ENCODE measurements at regions of chr3 and their contacts with region 1.

Region 1: GRCh38 chr3:14780927-14781507 is 37.7 kb upstream of the FGD5 start:
- DNase-seq: peak; percentile 82
- CTCF ChIP-seq: peak; percentile 88

Region 2: DNA sequence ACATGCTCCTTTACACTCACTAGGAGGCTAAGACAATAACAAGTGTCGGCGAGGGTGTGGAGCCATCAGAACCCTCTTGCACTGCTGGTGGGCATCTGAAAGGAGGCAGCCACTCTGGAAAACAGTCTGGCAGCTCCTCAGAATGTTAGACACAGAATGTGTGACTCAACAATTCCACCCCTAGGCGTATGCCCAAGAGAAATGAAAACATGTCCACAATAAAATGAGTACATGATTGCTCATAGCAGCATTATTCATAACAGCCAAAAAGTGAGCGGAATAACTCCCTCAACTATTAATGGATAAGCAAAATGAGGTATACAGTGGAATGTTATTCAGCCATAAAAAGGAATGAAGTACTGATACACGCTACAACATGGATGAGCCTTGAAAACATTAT is 959.0 kb before region 1 on chr3:
- CTCF ChIA-PET with region 1: no interaction called
- POLR2A ChIA-PET with region 1: no interaction called
- DNase-seq: no peak
- CTCF ChIP-seq: no peak

Region 3: GRCh38 chr3:14508961-14509795 is 271.8 kb before region 1 on chr3:
- CTCF ChIA-PET with region 1: interaction called, 21 read pairs
- POLR2A ChIA-PET with region 1: no interaction called
- DNase-seq: peak; percentile 87
- CTCF ChIP-seq: peak; percentile 93

Region 4: GRCh38 chr3:14651440-14652251 is 129.4 kb before region 1 on chr3 and contains the start of gene CCDC174:
- CTCF ChIA-PET with region 1: interaction called, 24 read pairs
- POLR2A ChIA-PET with region 1: no interaction called
- DNase-seq: peak; percentile 94
- CTCF ChIP-seq: no peak

Region 5: GRCh38 chr3:14691239-14691638 is 89.8 kb before region 1 on chr3:
- CTCF ChIA-PET with region 1: interaction called, 17 read pairs
- POLR2A ChIA-PET with region 1: no interaction called
- DNase-seq: peak; percentile 50
- CTCF ChIP-seq: no peak

Region 6: DNA sequence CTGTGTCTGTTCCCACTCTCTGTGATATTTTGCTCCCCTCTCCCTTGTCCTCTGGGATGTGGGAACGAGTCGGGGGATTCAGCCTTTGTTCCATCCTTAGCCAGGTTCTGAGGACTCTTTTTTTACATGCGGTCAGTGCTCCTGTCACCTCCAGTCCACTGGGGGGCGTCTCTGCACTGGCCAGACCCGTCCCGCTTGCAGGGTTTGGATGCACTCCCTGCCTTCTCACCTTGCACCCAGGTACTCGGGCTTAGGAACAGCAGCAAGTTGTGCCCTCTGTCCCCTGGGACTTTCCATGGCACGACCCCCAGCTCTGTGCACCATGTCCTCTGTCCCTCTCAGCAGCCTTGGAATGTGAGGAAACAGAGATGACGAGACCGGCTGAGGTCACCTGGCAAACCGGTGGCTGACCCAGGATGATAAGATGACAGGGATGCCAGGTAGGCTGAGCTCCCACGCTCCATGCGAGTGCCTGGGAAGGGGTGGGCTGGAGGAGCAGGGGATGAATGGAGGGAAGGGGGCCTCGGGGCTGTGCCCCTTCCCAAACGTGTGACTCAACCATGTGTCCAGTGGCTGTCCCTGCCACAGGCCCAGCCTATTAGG is 10.4 kb after region 1 on chr3:
- CTCF ChIA-PET with region 1: interaction called, 36 read pairs
- POLR2A ChIA-PET with region 1: no interaction called
- DNase-seq: peak; percentile 78
- CTCF ChIP-seq: peak; percentile 74

Measured in GM10248 (cell line).